PC-3 (cell line): ENCODE measurements at regions of chr7 and their contacts with region 1.

Region 1: DNA sequence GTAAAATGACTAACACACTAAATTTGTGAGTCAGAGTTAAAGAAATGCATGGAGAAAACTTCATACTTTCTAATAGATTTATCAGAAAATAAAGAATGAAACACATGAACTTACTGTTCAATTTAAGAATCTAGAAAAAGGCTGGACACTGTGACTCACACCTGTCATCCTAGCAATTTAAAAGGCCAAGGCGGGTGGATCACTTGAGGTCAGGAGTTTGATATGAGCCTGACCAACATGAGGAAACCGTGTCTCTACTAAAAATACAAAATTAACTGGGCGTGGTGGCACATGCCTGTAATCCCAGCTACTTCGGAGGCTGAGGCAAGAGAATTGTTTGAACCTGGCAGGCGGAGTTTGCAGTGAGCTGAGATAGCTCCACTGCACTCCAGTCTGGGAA is 1106.2 kb upstream of the LRRN3 start:
- DNase-seq: peak; percentile 26
- ATAC-seq: peak; percentile 54
- H3K4me3 ChIP-seq: no peak overlapping the region
- H3K27ac ChIP-seq: no peak overlapping the region
- H3K4me1 ChIP-seq: peaks cover 8% of the 10 kb centered on the region; the same call in 1 of the 2 replicates
- H3K27me3 ChIP-seq: no peaks in the 10 kb centered on the region
- CTCF ChIP-seq: no peak

Region 2: DNA sequence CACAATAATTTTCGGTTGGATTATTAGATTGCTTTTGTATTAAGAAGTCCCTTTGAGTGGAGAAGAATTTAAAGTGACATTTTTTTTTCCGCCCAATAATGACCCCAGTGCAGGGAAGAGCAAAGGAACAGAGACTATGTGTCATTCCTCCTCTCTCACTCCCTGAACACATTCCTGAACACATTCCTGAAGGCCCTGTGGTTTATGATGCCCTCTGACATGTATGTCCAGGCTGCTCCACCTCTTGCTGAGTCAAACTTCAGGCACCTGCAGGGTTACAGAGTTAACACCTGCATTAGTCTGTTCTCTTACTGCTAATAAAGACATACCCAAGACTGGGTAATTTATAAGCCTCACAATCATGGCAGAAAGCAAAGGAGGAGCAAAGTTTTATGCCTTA is 402.2 kb after region 1 on chr7:
- CTCF ChIA-PET with region 1: no interaction called
- POLR2A ChIA-PET with region 1: no interaction called
- intact Hi-C with region 1: loop called (anchors 10 kb)
- DNase-seq: peak; percentile 85
- ATAC-seq: peak; percentile 100
- H3K4me3 ChIP-seq: no peak overlapping the region
- H3K27ac ChIP-seq: no peak overlapping the region
- H3K4me1 ChIP-seq: peaks cover 21% of the 10 kb centered on the region
- H3K27me3 ChIP-seq: no peaks in the 10 kb centered on the region
- CTCF ChIP-seq: no peak